ENCODE measurements at regions of chr3 and their contacts with region 1.

Region 1: DNA sequence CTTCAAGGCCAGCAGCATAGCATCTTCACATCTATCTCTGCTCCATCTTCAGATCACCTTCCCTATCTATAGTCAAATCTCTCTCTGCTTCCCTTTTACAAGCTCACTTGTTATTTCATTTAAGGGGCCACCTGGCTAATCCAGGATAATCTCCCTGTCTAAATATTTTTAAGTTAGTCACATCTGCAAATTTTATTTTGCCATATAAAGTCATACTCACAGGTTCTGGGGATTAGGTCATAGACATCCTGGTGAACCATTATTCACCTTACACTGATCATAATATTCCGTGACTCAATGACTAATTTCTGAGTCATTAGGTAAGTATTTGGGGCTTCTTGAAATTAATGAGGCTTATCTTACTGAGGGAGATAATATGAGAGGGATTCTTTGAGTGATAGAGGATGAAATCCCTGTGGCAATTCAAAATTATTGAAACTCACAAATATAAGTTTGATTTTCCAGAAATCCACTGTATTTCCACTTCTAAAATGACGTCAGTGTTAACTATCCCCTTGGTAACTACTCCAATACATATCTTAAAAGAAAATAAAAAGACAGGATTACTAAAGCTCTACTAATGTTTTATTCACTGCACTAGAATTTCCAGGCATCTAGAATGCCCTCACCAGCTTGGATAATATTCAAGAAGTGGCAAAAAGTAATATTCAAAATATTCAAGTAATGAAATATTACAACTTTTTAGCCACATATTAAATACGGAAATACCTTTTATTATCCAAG is 93.7 kb upstream of the RBMS3 start:
- DNase-seq: no peak
- H3K4me3 ChIP-seq: no peak overlapping the region
- H3K27ac ChIP-seq: no peak overlapping the region
- H3K4me1 ChIP-seq: no peaks in the 10 kb centered on the region
- H3K27me3 ChIP-seq: no peaks in the 10 kb centered on the region
- CTCF ChIP-seq: no peak
- EP300 ChIP-seq: no peak
- POLR2A ChIP-seq: no peak

Region 2: GRCh38 chr3:29144807-29145206 is 42.3 kb before region 1 on chr3:
- in situ Hi-C with region 1: no loop called
- intact Hi-C with region 1: loop called (anchors 1 kb)
- DNase-seq: peak; percentile 8
- H3K4me3 ChIP-seq: no peak overlapping the region
- H3K27ac ChIP-seq: no peak overlapping the region
- H3K4me1 ChIP-seq: peaks cover 0 to 27% (median 3%) of the 10 kb centered on the region in 4 donors
- H3K27me3 ChIP-seq: no peaks in the 10 kb centered on the region
- CTCF ChIP-seq: no peak
- EP300 ChIP-seq: no peak
- POLR2A ChIP-seq: no peak